A549 (cell line): ENCODE measurements at regions of chr4 and their contacts with region 1.

Region 1: GRCh38 chr4:118235566-118236120 is 117.2 kb downstream of the PRSS12 start:
- DNase-seq: no peak
- ATAC-seq: no peak
- H3K4me3 ChIP-seq: no peak overlapping the region
- H3K27ac ChIP-seq: no peak overlapping the region
- H3K4me1 ChIP-seq: no peaks in the 10 kb centered on the region
- CTCF ChIP-seq: no peak
- EP300 ChIP-seq: no peak
- POLR2A ChIP-seq: no peak
- RAD21 ChIP-seq: no peak

Region 2: DNA sequence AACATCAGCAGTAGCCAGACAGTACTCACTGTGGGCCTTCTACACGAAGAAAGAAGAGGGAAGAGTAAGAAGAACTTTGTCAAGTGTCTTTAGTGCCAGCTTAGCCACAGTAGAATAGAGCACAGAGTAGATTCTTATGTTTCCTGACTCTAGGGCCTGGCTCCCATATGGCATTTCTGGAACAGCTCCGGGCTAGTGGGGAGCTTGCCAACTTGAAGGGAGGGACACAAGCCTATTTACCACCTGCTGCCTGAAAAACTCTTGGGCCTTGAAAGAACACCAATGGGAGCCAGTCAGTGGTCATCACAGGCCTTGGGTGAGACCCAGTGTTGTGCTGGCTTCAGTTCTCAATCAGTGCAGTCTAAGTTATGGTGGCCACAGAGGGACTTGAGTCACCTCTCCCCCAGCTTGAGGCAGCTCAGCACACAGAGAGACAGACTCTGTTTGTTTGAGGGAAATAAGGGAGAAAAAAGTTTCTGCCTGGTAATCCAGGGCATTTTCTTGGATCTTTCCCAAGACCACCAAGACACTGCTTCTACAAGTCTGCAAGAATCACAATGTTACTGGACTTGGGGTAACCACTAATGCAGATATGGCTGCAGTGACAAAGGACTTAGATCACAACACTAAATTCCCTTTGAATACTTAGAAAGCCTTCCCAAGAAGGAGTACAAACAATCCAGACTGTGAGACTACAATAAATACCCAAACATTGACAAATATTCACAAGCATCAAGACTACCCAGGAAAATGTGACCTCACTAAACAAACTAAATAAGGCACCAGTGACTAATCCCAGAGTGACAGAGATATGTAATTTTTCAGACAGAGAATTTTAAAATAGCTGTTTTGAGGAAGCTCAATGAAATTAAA is 462.3 kb before region 1 on chr4:
- CTCF ChIA-PET with region 1: no interaction called
- POLR2A ChIA-PET with region 1: no interaction called
- DNase-seq: no peak
- ATAC-seq: no peak
- H3K4me3 ChIP-seq: no peak overlapping the region
- H3K27ac ChIP-seq: no peak overlapping the region
- H3K4me1 ChIP-seq: no peaks in the 10 kb centered on the region
- CTCF ChIP-seq: no peak
- EP300 ChIP-seq: no peak
- POLR2A ChIP-seq: no peak
- RAD21 ChIP-seq: no peak

Region 3: DNA sequence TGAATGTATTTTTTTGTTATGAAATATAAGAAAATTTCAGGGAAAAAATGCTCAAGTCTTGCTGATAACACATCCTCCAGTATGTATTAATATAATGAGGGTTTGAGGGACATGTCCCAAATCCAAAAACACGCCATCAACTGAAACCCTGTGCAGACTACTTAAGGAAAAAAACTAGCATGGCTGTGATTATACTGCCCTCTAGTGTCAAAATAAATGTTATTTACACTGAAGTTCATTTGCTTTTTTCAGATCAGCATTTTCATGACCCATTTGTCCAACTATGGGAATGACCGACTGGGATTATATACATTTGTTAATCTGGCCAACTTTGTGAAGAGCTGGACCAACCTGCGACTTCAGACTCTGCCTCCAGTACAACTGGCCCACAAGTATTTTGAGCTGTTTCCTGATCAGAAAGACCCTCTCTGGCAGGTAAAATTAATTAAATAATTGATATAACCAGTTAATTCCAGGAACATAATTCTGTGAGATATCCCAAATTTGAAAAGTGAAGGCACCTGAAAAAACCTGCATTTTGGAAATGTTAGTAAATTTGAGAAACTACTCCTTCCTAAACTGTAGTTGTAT is 11.3 kb before region 1 on chr4:
- CTCF ChIA-PET with region 1: interaction called, 12 read pairs
- POLR2A ChIA-PET with region 1: no interaction called
- DNase-seq: peak; percentile 2 to 52
- ATAC-seq: peak; percentile 56 to 72; a peak in 4 of 6 replicates
- H3K4me3 ChIP-seq: no peak overlapping the region
- H3K27ac ChIP-seq: no peak overlapping the region
- H3K4me1 ChIP-seq: no peaks in the 10 kb centered on the region
- CTCF ChIP-seq: peak; percentile 66
- EP300 ChIP-seq: no peak
- POLR2A ChIP-seq: no peak
- RAD21 ChIP-seq: peak; percentile 65 to 66

Region 4: DNA sequence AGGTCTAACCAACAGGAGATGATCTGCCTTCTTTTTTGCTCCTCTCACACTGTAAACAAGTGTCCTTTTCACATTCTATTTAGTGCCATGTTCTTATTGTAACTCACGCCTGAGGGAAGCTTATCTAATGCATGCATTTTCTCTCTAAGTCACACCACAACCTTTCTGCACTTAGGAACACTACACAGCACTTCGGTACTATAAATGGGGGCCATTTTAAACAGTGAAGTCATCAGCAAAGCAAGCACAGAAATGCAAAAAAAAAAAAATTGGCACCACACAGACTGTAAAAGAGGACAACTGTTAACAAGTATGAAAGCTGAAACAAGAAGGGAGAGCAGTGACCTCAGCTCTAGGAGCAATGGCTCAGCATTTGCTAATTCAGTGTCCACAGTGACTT is 72.0 kb after region 1 on chr4:
- CTCF ChIA-PET with region 1: no interaction called
- POLR2A ChIA-PET with region 1: no interaction called
- DNase-seq: no peak
- ATAC-seq: no peak
- H3K4me3 ChIP-seq: no peak overlapping the region
- H3K27ac ChIP-seq: no peak overlapping the region
- H3K4me1 ChIP-seq: no peaks in the 10 kb centered on the region
- CTCF ChIP-seq: no peak
- EP300 ChIP-seq: no peak
- POLR2A ChIP-seq: no peak
- RAD21 ChIP-seq: no peak